PC-3 (cell line): ENCODE measurements at regions of chr13 and their contacts with region 1.

Region 1: GRCh38 chr13:27868641-27869435 is 51.0 kb upstream of the PDX1 start:
- DNase-seq: peak; percentile 42
- ATAC-seq: no peak
- H3K4me3 ChIP-seq: no peak overlapping the region
- H3K27ac ChIP-seq: no peak overlapping the region
- H3K4me1 ChIP-seq: no peaks in the 10 kb centered on the region
- H3K27me3 ChIP-seq: peaks cover 39% of the 10 kb centered on the region
- CTCF ChIP-seq: peak; percentile 74

Region 2: DNA sequence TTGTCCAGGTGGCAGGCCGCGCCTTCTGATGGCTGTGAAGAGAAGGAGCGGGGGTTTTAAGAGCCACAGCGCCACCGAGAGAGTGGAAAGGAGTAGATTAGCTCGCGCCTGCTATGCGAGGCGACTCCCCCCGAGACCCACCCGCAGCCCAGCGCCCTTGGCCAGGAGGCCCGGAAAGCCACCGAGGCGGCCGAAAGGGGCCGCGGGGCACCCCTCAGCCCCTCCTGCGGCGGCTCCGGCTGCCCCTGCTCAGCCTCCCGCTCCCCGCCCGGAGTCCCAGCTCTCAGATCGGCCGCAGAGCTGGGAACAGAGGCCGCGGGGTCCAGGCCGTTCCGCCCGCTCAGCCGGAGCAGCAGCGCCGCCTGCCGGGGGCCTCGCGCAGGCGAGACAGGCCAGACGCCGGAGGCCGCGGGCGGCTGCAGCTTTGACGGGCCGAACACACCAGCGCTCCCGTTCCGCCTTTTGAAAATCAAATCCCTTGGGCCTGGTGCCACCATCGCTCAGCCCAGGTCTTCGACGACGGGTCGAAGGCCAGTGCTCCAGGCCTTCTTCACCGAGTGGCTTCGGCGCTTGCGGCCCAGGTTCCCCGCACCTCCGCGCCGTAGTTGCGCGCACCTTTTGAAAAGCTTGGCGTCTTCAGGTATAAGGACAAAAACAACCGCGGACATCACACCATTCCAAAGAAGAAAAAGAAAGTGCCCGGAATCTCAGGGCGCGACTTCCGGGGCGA is 85.0 kb after region 1 on chr13:
- CTCF ChIA-PET with region 1: interaction called, 11 read pairs
- POLR2A ChIA-PET with region 1: no interaction called
- intact Hi-C with region 1: loop called (anchors 1 kb)
- DNase-seq: peak; percentile 79
- ATAC-seq: peak; percentile 97
- H3K4me3 ChIP-seq: peak overlapping the region; percentile 74
- H3K27ac ChIP-seq: peak overlapping the region; percentile 38
- H3K4me1 ChIP-seq: peaks cover 19% of the 10 kb centered on the region
- H3K27me3 ChIP-seq: no peaks in the 10 kb centered on the region
- CTCF ChIP-seq: peak; percentile 74